ENCODE measurements at regions of chr20 and their contacts with region 1.

Region 1: DNA sequence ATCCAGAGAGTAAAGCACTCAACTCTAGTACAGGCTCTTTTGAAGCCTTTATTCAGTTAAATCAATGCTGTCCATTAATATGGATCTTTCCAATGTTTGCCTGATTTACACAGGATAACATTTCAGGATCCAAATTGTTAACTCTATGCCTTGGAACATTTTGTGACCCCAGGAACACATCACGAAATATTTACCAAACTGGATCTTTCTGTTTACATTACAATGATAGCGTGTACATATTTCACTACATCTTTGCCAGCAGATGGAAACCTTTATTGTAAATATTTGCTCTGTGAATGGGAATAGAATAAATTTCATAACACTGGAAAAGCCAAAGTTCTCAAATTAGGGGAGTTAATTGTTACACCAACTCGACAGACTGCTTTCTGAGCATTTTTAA is 23.5 kb downstream of the BPIFA2 start:
- DNase-seq: no peak
- ATAC-seq: no peak
- H3K4me3 ChIP-seq: no peak overlapping the region
- H3K27ac ChIP-seq: no peak overlapping the region
- H3K4me1 ChIP-seq: no peaks in the 10 kb centered on the region
- H3K27me3 ChIP-seq: no peaks in the 10 kb centered on the region
- CTCF ChIP-seq: no peak
- POLR2A ChIP-seq: no peak
- RAD21 ChIP-seq: no peak

Region 2: DNA sequence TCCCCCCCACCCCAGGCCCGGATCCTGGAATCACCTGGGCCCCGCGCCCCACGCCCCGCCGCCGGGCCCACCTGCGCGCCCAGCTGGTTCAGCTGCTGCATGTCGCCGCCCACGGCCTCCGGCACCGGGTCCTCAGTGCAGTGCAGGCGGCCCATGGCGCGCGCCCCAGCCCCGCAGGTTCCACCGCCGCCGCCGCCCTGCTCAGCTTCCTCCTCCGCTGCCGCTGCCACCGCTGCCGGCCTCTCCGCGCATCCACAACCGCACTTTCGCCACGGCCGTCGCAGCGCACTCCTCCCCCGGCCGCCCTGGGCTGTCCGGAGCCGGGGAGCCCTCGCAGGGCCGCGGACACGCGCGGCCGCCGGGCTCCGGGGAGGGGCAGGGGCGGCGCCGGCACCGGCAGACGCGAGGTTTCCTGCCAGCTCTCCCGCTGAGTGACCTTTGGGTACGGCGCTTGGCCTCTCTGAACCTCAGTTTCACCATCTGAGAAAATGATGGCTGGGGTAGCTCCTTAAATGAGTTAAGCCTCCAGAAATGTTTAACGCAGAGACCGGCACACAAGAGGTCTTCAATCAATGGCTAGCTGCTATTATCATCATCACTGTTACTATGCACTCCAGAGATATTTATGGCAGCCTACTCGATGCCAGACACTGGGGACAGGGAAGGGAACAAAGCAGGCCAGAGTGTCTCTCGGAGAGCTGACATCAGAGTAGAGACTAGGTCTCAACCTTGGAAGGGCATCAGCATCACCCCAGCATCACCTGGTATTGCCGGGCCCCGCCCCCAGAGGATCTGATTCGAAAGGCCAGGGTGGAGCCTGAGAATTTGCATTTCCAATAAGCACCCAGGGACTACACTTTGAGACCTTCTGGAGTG is 448.0 kb before region 1 on chr20 and contains the start of gene COMMD7:
- CTCF ChIA-PET with region 1: no interaction called
- POLR2A ChIA-PET with region 1: interaction called, 10 read pairs
- dilution Hi-C with region 1: no loop called
- in situ Hi-C with region 1: no loop called
- intact Hi-C with region 1: no loop called
- DNase-seq: peak; percentile 44
- ATAC-seq: peak; percentile 73
- H3K4me3 ChIP-seq: peak within 1 kb of the TSS; percentile 89
- H3K27ac ChIP-seq: peak within 1 kb of the TSS; percentile 62
- H3K4me1 ChIP-seq: peaks cover 16% of the 10 kb centered on the region
- H3K27me3 ChIP-seq: no peaks in the 10 kb centered on the region
- CTCF ChIP-seq: no peak
- POLR2A ChIP-seq: 0 out of 2 replicates have a peak, but pooled peaks have one; percentile 46
- RAD21 ChIP-seq: 0 out of 2 replicates have a peak, but pooled peaks have one; percentile 2
- total RNA-seq, gene COMMD7: 46.9 and 51.8 TPM in 2 replicates

Measured in IMR-90 (cell line).